ENCODE measurements at regions of chr17 and their contacts with region 1.

Region 1: GRCh38 chr17:2847381-2848333 is 51.4 kb downstream of the RAP1GAP2 start:
- H3K4me3 ChIP-seq: no peak overlapping the region
- H3K27ac ChIP-seq: no peak overlapping the region
- H3K4me1 ChIP-seq: no peaks in the 10 kb centered on the region
- CTCF ChIP-seq: no peak

Region 2: DNA sequence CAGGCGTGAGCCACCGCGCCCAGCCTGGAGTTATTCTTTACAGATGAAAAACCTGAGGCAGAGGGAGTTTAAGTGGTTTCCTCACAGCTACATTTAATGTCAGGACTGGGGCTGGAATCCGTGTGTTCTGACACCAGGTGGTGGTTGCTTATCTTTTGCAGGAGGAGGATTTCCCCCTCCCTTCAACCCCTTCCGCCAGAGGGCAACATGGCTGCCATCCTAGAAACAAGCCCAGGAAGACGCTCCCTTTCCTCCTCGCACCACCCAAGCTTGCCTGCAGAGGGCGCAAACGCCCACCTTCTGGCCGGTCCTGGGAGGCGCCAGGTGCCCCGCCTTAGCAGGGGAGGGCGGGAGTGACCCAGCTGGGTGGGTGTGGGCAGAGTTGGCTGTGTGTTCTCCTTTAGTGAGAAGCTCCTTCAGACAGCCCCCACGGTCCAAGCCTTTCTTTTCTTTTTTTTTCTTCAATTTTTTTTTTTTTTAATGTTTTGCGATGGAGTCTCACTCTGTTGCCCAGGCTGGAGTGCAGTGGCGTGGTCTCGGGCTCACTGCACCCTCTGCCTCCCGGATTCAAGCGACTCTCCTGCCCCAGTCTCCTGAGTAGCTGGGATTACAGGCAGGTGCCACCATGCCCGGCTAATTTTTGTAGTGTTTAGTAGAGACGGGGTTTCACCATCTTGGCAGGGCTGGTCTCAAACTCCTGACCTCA is 61.3 kb before region 1 on chr17:
- CTCF ChIA-PET with region 1: interaction called, 17 read pairs
- POLR2A ChIA-PET with region 1: no interaction called
- H3K4me3 ChIP-seq: no peak overlapping the region
- H3K27ac ChIP-seq: no peak overlapping the region
- H3K4me1 ChIP-seq: no peaks in the 10 kb centered on the region
- CTCF ChIP-seq: peak; percentile 96

Region 3: GRCh38 chr17:2837147-2837561 is 10.5 kb before region 1 on chr17:
- CTCF ChIA-PET with region 1: interaction called, 21 read pairs
- POLR2A ChIA-PET with region 1: no interaction called
- H3K4me3 ChIP-seq: no peak overlapping the region
- H3K27ac ChIP-seq: no peak overlapping the region
- H3K4me1 ChIP-seq: no peaks in the 10 kb centered on the region
- CTCF ChIP-seq: no peak

Region 4: DNA sequence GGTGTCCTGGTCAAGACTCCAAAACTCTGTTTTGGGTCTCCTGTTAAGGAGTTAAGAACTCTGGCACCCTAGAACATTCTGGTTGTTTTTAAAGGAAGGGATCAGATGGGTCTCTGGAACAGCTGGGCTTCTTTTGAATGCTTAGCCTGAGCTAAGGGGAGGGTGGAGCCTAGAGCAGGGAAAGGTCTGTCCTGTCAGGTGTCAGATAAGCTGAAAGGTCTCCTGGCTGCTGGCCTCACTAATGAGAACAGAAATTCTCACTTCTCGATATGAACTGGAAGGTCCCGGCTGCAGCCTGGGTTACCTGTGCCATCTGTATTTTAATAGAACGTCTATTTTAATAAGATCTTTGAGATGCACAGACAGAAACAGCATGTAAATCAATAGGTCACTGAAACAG is 17.6 kb after region 1 on chr17:
- CTCF ChIA-PET with region 1: interaction called, 22 read pairs
- POLR2A ChIA-PET with region 1: interaction called, 3 read pairs
- H3K4me3 ChIP-seq: no peak overlapping the region
- H3K27ac ChIP-seq: no peak overlapping the region
- H3K4me1 ChIP-seq: no peaks in the 10 kb centered on the region
- CTCF ChIP-seq: no peak

Region 5: GRCh38 chr17:2883567-2884101 is 36.0 kb after region 1 on chr17:
- CTCF ChIA-PET with region 1: no interaction called
- POLR2A ChIA-PET with region 1: no interaction called
- H3K4me3 ChIP-seq: no peak overlapping the region
- H3K27ac ChIP-seq: peak overlapping the region; percentile 16; the same call in 1 of the 2 replicates
- H3K4me1 ChIP-seq: peaks cover 8% of the 10 kb centered on the region
- CTCF ChIP-seq: no peak

Region 6: GRCh38 chr17:2937331-2938003 is 89.8 kb after region 1 on chr17:
- CTCF ChIA-PET with region 1: interaction called, 94 read pairs
- POLR2A ChIA-PET with region 1: no interaction called
- H3K4me3 ChIP-seq: no peak overlapping the region
- H3K27ac ChIP-seq: no peak overlapping the region
- H3K4me1 ChIP-seq: no peaks in the 10 kb centered on the region
- CTCF ChIP-seq: no peak

Region 7: GRCh38 chr17:3012926-3013581 is 165.4 kb after region 1 on chr17:
- CTCF ChIA-PET with region 1: interaction called, 91 read pairs
- POLR2A ChIA-PET with region 1: interaction called, 10 read pairs
- H3K4me3 ChIP-seq: no peak overlapping the region
- H3K27ac ChIP-seq: no peak overlapping the region
- H3K4me1 ChIP-seq: no peaks in the 10 kb centered on the region
- CTCF ChIP-seq: peak; percentile 84

Measured in HEK293 (cell line).